ENCODE measurements at regions of chr20 and their contacts with region 1.

Region 1: GRCh38 chr20:35720165-35721123 is 21.2 kb downstream of the ROMO1 start:
- DNase-seq: no peak
- ATAC-seq: no peak

Region 2: DNA sequence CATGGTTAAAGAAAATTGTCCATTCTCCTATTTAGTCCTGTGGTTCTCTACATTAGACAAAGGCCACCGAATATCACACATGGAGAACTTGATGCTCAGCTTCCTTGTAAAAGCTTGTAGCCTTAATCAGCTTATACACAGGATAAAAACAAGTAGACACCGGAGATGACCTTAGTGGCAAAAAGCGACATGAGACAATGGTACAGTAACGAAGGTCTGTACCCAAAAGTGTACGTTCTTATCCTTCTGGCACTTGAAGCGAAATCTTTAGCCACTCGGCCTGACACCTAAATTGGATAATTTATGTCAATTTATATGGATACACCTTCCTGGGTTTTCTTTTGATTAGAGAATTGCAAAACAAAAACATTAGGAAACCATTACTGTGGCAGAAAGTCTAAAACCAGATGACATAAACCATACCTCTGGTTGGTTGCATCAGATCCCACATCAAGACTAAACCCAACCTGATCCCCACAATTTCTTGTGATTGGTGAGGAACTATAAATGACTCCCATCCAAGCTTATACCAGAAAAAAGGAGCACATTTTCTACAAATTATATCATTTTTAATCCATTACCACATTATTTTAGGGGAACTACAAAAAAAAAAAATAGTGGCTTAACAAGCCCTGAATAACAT is 15.5 kb after region 1 on chr20:
- intact Hi-C with region 1: loop called in 1 of 2 experiments (anchors 2 kb)
- DNase-seq: no peak
- ATAC-seq: no peak

Region 3: DNA sequence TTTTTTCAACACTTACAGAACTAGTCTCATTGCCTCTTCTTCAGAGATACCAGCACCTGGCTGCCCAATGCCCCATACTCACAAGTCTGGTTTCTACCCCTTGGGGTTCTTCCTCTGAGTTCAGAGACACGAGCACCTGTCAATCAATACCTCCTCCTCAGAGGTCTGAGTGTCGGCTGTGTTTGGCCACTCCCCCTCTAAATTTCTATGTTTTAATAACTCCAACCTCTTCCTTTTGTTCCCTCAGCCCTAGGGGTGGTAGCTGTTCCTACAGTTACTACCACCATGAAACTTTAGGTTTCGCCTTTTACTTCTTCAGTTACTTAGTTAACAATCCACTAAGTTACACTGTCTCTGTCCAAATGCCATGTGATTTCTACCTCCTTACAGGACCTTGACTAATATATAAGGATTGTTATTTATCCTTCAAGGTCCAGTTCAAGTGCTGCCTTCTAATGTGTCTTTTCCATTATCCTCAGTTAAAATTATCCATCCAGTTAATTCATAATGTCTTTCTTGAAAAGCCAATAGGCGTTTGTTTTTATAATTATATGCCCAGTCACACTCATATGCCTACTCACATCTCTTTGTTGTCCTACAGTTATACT is 36.8 kb after region 1 on chr20:
- intact Hi-C with region 1: no loop called
- DNase-seq: no peak
- ATAC-seq: no peak

Region 4: DNA sequence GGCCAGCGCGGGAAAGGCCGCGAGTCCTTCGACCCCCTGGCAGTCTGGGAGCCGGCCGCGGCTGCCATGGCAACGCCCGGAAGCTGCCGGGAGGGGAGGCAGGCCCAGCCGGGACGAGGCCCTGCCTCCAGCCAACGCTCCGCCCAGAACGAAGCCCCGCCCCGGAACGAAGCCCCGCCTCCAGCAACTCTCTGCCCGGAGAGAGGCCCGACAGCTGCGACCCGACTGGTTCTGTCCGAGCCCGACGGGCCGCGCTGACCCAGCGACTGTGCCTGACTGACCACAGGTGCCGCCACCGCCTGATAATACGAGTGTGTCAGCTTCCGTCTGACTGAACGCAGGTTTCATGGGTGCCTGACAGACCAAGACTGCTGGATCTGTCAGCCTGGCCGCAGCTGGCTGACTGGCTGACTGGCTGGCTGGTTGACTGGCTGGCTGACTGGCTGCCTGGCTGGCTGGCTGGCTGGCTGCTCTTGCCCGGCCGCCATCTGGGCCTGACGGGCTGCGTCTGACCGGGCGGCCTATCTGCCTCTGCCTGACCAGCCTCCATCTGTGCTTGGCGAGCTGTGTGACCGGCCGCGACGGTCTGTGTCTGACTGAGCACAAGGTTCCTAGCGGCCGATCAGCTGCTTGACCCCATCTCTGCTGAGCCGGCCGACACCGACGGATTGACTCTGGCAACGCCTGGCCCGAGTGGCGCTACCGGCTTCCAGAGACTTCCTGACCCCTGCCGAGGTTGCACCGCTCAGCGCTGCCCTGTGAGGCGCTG is 344.4 kb after region 1 on chr20:
- intact Hi-C with region 1: no loop called
- DNase-seq: peak; percentile 94
- ATAC-seq: peak; percentile 97 to 98

Region 5: DNA sequence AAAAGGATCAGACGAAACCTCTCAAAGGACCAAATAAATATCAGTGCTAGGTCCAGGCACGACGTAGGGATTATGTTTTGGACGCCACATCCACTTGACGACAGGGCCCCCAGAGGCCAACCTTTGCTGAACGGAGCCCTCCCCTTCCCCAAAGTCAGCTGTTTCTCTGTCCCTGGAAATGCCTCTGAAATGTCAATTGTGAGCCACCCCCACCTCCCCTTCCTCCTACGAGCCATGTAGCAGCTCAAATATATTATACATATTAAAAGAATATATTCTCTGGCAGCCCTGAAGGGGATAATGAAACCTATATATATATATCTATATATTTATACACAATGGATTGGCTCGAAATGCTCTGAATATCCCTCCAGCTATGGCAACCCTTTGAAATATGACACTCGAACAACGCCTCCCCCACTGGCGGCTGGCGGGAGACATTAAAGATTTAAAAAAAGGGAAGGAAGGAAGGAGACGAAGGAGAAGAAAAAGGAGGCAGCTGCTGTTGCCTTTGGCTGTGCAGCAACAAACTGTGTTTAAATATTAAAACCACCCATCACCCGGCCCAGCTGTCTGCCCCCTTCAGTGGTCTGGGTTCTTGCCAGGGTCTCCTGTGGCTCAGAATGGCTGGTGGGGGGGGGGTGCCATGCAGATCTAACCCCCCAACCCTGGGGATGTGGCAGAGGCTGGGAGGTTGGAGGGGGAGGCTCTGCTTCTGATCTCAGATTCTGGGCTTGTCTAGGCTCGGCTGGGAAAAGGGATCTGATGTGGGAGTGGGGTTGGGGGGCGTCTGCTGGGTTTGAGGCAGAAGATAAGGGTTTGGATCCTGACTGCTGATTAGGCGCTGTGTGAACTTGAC is 1847.1 kb after region 1 on chr20:
- intact Hi-C with region 1: no loop called
- DNase-seq: no peak
- ATAC-seq: no peak